RWPE1 (cell line): ENCODE measurements at regions of chr6 and their contacts with region 1.

Region 1: DNA sequence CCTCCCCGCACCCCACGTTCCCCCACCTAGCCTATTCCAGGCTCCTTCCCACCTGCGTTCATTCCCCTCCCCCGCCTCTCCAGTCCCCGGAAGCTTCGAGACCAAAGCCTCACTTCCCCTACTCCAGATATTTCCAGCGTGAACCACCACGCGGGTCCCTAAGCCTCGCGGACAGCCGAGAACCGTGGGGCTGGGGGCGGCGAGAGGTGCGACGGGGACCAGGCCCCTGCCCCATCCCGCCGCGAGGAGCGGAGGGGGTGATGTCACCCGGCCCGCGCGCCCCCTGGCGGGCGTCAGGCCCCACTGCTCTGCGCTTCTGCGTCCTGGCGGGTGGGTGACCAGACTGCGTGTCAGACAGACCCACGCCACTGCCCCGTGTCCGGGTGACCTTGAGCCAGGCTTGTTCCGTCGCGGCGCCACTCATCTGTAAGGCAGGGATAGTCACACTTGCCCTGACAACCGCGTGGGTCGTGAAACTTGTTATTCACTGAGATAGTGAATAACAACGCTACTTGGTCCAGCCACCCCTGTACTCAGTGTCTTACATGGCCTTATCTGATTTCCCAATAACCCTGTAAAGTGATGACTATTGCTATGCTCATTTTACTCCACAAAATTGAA is 9.0 kb upstream of the HSP90AB1 start:
- DNase-seq: no peak
- H3K27ac ChIP-seq: peak overlapping the region; percentile 94
- CTCF ChIP-seq: peak; percentile 97

Region 2: GRCh38 chr6:44052419-44053023 is 185.4 kb before region 1 on chr6:
- CTCF ChIA-PET with region 1: no interaction called
- POLR2A ChIA-PET with region 1: no interaction called
- DNase-seq: no peak
- H3K27ac ChIP-seq: peak overlapping the region; percentile 81
- CTCF ChIP-seq: no peak

Region 3: GRCh38 chr6:44172731-44173500 is 65.0 kb before region 1 on chr6:
- CTCF ChIA-PET with region 1: interaction called, 11 read pairs
- POLR2A ChIA-PET with region 1: no interaction called
- DNase-seq: peak; percentile 81
- H3K27ac ChIP-seq: no peak overlapping the region
- CTCF ChIP-seq: peak; percentile 82

Region 4: GRCh38 chr6:44223319-44224028 is 14.4 kb before region 1 on chr6 and contains the start of gene SLC29A1:
- CTCF ChIA-PET with region 1: interaction called, 11 read pairs
- POLR2A ChIA-PET with region 1: interaction called, 4 read pairs
- DNase-seq: peak; percentile 87
- H3K27ac ChIP-seq: peak within 1 kb of the TSS; percentile 86
- CTCF ChIP-seq: 0 out of 2 replicates have a peak, but pooled peaks have one; percentile 11

Region 5: GRCh38 chr6:45591306-45591705 is 1353.4 kb after region 1 on chr6:
- CTCF ChIA-PET with region 1: interaction called, 11 read pairs
- POLR2A ChIA-PET with region 1: no interaction called
- DNase-seq: no peak
- H3K27ac ChIP-seq: peak overlapping the region; percentile 70; the same call in 1 of the 2 replicates
- CTCF ChIP-seq: no peak